ENCODE measurements at regions of chr19 and their contacts with region 1.

Region 1: DNA sequence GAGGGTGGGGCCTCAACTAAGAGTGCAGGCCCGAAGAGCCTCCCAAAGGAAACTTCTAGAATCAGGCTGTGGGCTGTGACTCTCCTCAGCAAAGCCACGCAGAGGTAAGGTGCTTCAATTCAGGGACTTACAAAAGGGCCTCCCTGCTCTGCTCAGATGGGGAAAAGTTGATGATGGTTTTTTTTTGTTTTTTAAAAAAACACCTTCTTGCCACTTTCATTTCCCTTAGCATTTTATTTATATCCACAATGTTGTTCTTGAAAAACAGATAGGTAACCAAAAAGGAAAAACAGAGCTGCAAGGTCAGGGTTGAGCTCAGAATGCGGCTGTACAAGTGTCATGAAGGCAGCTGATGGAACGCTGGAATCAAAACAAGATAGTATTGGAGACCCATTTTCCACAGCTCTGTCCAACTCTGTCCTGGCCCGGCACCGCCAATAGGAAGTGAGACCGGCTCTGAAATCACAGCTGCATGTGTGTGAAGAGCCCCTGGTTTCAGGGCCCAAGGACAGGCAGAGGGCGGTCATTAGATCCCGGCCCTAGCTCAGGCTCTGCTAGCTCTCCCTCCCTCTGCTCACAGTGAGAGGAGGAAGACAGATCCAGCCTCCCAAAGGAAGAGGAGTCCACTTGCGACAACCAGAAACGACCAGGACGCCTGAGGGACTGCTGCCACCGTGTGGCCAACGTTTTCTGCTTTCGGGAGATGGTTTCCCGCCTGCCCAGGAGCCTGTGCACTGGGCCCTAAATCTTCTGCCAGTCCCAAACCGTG is 58.3 kb downstream of the KLF2 start:
- DNase-seq: peak; percentile 86
- H3K4me3 Mint-ChIP-seq: no peak overlapping the region
- H3K27ac Mint-ChIP-seq: peak overlapping the region; percentile 60
- H3K4me1 Mint-ChIP-seq: peaks cover 41% of the 10 kb centered on the region
- H3K27me3 Mint-ChIP-seq: no peaks in the 10 kb centered on the region

Region 2: DNA sequence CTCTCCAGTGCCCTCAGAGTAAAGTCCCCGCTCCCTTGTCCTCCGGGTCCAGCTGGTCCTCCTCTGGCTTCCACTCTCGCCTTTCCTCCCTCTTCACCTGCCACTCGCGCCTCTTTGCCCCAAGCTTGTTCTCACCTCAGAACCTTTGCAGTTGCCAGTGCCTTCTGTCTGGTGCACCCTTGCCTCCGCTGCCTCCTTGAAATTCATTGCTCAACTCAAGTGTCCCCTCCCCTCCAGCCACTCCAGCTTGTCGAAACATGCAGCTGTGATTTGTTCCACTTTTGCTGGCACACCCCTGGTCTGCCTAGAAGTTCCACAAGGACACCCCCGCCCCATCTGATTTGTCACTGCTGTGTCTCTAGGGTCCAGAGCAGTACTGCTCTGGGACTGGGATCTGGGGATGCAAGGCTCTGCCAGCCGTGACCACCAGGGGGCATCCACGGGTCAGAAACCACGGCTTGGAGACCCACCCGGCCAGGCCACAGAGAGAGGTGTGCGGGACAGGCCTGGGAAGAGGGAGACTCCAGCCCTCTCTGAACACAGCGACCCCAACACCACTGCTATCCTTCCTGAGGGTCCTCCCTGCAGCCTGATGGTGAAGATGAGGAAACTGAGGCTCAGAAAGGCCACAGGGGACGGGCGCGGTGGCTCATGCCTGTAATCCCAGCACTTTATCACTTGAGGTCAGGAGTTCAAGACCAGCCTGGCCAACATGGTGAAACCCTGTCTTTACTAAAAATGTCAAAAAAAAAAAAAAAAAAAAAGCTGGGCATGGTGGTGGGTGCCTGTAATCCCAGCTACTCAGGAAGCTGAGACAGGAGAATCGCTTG is 135.4 kb before region 1 on chr19:
- CTCF ChIA-PET with region 1: interaction called, 143 read pairs
- POLR2A ChIA-PET with region 1: no interaction called
- intact Hi-C with region 1: loop called (anchors 1 kb)
- DNase-seq: peak; percentile 88
- H3K4me3 Mint-ChIP-seq: no peak overlapping the region
- H3K27ac Mint-ChIP-seq: no peak overlapping the region
- H3K4me1 Mint-ChIP-seq: peaks cover 12% of the 10 kb centered on the region
- H3K27me3 Mint-ChIP-seq: no peaks in the 10 kb centered on the region

Region 3: GRCh38 chr19:16330368-16330801 is 52.6 kb before region 1 on chr19:
- CTCF ChIA-PET with region 1: interaction called, 24 read pairs
- POLR2A ChIA-PET with region 1: interaction called, 4 read pairs
- intact Hi-C with region 1: no loop called
- DNase-seq: peak; percentile 98
- H3K4me3 Mint-ChIP-seq: peak overlapping the region; percentile 40
- H3K27ac Mint-ChIP-seq: peak overlapping the region; percentile 79
- H3K4me1 Mint-ChIP-seq: peaks cover 57% of the 10 kb centered on the region
- H3K27me3 Mint-ChIP-seq: peaks cover 20% of the 10 kb centered on the region

Region 4: DNA sequence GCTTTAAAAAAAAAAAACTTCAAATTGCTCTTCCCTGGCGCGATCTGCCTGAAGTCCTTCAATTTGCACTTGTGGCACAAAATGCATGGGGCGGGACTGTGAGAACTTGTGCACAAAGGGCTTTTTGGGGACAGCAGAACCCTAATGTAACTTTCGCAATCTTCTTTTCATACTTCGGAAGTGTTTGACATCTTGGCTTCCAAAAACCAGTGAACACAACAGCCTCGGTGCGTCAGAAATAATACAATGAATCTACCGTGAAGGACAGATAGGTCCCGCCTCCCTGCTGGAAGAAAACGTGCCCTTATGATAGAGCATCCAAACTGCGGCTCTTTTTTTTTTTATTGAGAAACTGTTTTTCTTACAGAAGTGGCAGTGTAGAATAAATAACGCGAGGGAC is 21.7 kb before region 1 on chr19:
- CTCF ChIA-PET with region 1: interaction called, 10 read pairs
- POLR2A ChIA-PET with region 1: no interaction called
- intact Hi-C with region 1: no loop called
- DNase-seq: no peak
- H3K4me3 Mint-ChIP-seq: no peak overlapping the region
- H3K27ac Mint-ChIP-seq: no peak overlapping the region
- H3K4me1 Mint-ChIP-seq: peaks cover 85% of the 10 kb centered on the region
- H3K27me3 Mint-ChIP-seq: peaks cover 8% of the 10 kb centered on the region

Region 5: DNA sequence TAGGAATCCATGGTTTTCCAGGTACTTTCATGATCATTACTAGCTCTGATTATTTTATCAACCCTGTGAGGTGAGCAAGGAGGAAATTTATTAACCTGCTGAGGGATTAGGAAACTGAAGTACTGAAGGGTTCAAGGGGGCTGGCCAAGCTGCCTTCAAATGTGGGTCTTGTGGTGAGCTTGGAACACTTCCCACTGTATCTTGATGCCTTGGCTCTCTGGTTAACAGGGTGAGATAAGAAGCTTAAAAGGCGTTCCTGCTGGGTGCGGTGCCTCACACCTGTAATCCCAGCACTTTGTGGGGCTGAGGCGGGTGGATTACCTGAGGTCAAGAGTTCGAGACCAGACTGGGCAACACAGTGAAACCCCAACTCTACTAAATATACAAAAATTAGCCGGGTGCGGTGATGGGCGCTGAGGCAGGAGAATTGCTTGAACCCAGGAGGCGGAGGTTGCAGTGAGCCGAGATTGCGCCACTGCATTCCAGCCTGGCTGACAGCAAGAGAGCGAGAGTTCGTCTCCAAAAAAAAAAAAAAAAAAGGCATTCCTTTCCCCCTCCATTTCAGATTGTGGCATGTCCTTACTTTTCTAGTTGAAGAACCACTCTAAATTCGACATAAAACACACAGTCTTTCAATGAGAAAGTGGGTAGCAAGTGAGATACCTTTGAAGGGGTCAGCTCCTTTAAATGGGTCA is 11.9 kb after region 1 on chr19:
- CTCF ChIA-PET with region 1: interaction called, 12 read pairs
- POLR2A ChIA-PET with region 1: no interaction called
- intact Hi-C with region 1: no loop called
- DNase-seq: no peak
- H3K4me3 Mint-ChIP-seq: no peak overlapping the region
- H3K27ac Mint-ChIP-seq: no peak overlapping the region
- H3K4me1 Mint-ChIP-seq: peaks cover 9% of the 10 kb centered on the region
- H3K27me3 Mint-ChIP-seq: no peaks in the 10 kb centered on the region

Region 6: GRCh38 chr19:16449330-16449961 is 66.5 kb after region 1 on chr19:
- CTCF ChIA-PET with region 1: no interaction called
- POLR2A ChIA-PET with region 1: no interaction called
- intact Hi-C with region 1: no loop called
- DNase-seq: peak; percentile 60
- H3K4me3 Mint-ChIP-seq: no peak overlapping the region
- H3K27ac Mint-ChIP-seq: peak overlapping the region; percentile 75
- H3K4me1 Mint-ChIP-seq: peaks cover 51% of the 10 kb centered on the region
- H3K27me3 Mint-ChIP-seq: no peaks in the 10 kb centered on the region